A549 (cell line): ENCODE measurements at regions of chr2 and their contacts with region 1.

Region 1: GRCh38 chr2:29923110-29923721 is 1.8 kb upstream of the ALK start:
- DNase-seq: peak; percentile 75 to 77
- ATAC-seq: peak in 1 of 2 experiments; percentile 32; a peak in 1 of 6 replicates
- H3K4me3 ChIP-seq: no peak overlapping the region
- H3K27ac ChIP-seq: no peak overlapping the region
- H3K4me1 ChIP-seq: peaks cover 17% of the 10 kb centered on the region; the same call in 1 of the 3 replicates
- CTCF ChIP-seq: peak; percentile 97
- EP300 ChIP-seq: no peak
- POLR2A ChIP-seq: no peak
- RAD21 ChIP-seq: peak; percentile 80 to 84

Region 2: GRCh38 chr2:29463181-29463900 is 459.9 kb before region 1 on chr2:
- CTCF ChIA-PET with region 1: no interaction called
- POLR2A ChIA-PET with region 1: no interaction called
- DNase-seq: no peak
- ATAC-seq: no peak
- H3K4me3 ChIP-seq: no peak overlapping the region
- H3K27ac ChIP-seq: no peak overlapping the region
- H3K4me1 ChIP-seq: no peaks in the 10 kb centered on the region
- CTCF ChIP-seq: no peak
- EP300 ChIP-seq: no peak
- POLR2A ChIP-seq: no peak
- RAD21 ChIP-seq: no peak

Region 3: DNA sequence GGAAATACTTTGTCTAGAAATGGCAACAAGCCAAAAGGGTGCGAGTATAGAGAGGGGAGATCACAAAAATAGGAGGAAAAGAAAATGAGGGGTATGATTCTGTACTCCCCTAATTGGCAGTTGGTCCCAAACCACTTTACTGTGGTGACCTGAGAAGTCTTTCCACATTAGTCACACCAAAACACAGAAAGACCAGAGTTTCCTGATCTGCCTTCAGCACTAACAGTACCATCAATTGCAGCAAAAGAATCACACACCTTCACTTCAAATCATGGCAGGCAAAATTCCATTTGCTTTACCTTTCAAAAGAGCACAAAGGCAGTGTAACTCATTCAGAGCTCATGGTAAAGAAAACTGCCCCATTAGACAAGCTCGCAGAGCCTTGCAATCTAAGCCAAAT is 88.6 kb before region 1 on chr2:
- CTCF ChIA-PET with region 1: no interaction called
- POLR2A ChIA-PET with region 1: no interaction called
- DNase-seq: no peak
- ATAC-seq: no peak
- H3K4me3 ChIP-seq: no peak overlapping the region
- H3K27ac ChIP-seq: no peak overlapping the region
- H3K4me1 ChIP-seq: no peaks in the 10 kb centered on the region
- CTCF ChIP-seq: no peak
- EP300 ChIP-seq: no peak
- POLR2A ChIP-seq: no peak
- RAD21 ChIP-seq: no peak

Region 4: GRCh38 chr2:29910465-29910864 is 12.8 kb before region 1 on chr2:
- CTCF ChIA-PET with region 1: interaction called, 54 read pairs
- POLR2A ChIA-PET with region 1: no interaction called
- DNase-seq: no peak
- ATAC-seq: no peak
- H3K4me3 ChIP-seq: no peak overlapping the region
- H3K27ac ChIP-seq: no peak overlapping the region
- H3K4me1 ChIP-seq: no peaks in the 10 kb centered on the region
- CTCF ChIP-seq: no peak
- EP300 ChIP-seq: no peak
- POLR2A ChIP-seq: no peak
- RAD21 ChIP-seq: no peak

Region 5: DNA sequence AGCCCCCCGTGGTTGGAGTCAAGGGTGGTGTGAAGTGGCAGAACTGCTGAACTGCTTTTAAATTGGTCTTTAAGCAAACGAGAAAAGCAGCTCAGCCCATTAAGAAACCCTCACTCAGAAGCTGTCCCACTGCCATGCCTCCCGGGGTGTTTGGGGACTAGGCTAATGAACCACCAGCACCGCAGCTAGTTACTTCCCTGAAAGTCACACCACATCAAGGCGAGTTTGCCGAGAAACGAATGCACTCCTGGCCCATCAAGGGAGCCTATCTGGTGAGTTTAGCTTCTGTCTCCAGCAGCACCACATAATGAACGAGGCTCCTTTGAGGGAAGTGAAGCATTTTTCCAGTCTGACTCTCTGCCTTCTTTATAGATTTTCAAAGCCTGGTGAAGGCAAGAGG is 12.8 kb after region 1 on chr2:
- CTCF ChIA-PET with region 1: interaction called, 12 read pairs
- POLR2A ChIA-PET with region 1: no interaction called
- DNase-seq: no peak
- ATAC-seq: no peak
- H3K4me3 ChIP-seq: no peak overlapping the region
- H3K27ac ChIP-seq: no peak overlapping the region
- H3K4me1 ChIP-seq: no peaks in the 10 kb centered on the region
- CTCF ChIP-seq: no peak
- EP300 ChIP-seq: no peak
- POLR2A ChIP-seq: no peak
- RAD21 ChIP-seq: no peak

Region 6: DNA sequence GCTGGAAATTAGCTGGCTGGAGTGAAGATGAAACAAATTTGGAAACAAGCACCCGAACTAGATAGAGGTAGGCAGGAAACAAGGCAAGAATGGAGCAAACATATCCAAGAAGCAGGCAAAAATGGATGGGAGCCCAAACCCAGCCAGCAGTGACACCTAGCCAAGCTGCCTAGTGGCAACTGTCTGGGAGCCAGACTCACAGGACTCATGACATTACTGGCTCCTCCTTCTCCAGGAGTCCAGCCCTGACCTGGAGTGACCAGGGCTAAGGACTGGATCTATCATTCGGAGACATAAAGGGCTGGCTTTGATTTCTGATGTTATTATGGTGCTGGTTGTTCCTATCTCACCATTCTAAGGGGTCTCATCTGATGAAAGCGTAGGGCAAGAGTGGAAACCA is 19.5 kb after region 1 on chr2:
- CTCF ChIA-PET with region 1: interaction called, 11 read pairs
- POLR2A ChIA-PET with region 1: no interaction called
- DNase-seq: no peak
- ATAC-seq: no peak
- H3K4me3 ChIP-seq: no peak overlapping the region
- H3K27ac ChIP-seq: no peak overlapping the region
- H3K4me1 ChIP-seq: no peaks in the 10 kb centered on the region
- CTCF ChIP-seq: no peak
- EP300 ChIP-seq: no peak
- POLR2A ChIP-seq: no peak
- RAD21 ChIP-seq: no peak

Region 7: DNA sequence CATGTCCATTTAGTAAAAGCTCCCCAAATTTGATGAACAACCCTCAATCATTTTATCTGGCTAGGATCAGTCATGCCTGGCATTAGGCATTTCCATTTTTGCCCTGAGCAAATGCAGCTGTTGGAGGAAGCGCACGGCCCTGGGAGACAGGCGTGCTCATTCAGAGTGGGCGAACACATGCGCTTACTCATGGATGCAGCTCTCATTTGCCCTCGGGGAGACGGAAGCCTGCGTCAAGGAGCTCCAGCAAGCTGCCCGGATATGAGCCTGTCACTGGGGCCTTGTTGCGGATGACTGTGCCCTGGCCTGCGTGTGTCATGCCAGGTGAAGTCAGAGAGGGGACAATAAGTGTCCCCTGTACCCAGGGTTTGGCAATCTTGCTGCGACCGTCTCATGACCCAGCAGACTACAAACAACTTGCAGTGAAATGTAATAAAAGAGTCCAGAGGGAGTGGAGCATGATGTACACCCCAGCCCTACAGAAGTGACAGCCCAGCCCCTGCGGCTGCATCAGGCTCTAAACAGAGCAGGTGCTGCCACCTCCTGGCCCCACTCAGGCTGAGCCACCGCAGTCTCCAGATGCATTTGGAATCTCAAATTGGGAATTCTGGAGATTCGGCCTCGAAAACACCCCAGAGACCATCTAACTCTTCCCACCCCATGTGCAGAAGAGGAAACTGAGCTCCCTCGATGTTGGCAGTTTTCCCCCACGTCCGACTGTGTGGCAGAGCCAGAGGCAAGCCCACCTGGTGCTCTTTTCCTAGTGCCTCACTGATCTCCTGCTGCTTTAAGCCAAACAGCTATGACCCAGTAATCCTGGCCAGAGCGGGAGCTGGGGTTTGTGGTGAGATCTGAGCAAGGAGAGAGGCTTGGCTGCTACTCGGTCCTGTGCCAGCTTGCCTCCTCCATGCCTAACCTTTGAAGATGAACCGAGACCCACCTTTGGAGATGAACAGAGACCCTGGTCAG is 103.2 kb after region 1 on chr2:
- CTCF ChIA-PET with region 1: interaction called, 108 read pairs
- POLR2A ChIA-PET with region 1: no interaction called
- DNase-seq: peak; percentile 50 to 76
- ATAC-seq: peak; percentile 88 to 96
- H3K4me3 ChIP-seq: no peak overlapping the region
- H3K27ac ChIP-seq: no peak overlapping the region
- H3K4me1 ChIP-seq: no peaks in the 10 kb centered on the region
- CTCF ChIP-seq: peak; percentile 72
- EP300 ChIP-seq: no peak
- POLR2A ChIP-seq: no peak
- RAD21 ChIP-seq: peak; percentile 80 to 86

Region 8: DNA sequence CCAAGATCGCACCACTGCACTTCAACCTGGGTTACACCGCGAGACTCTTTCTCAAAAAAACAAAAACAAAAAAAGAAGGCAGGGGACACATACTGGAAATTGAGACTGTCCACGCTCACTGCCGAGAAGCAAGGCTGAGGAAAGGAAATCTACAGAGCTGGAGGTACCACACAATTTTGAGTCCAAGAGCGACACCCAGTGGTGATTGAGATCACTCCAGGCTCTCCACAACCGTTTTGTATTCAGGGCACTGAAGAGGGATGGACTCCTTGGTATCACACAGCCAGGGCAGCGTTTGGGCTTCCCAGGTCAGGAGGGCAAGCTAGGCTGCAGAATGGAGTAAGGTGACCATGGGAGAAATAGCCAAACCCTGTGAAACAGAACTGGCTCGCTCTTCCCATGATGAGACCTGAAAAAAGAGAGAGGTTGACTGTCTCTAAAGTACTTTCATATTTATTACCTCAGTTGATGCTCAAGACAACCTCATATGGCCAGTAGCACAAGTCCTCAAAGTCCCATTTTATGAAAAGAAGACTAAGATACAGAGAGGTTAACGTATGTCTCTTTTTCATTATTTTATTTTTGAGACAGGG is 149.1 kb after region 1 on chr2:
- CTCF ChIA-PET with region 1: interaction called, 16 read pairs
- POLR2A ChIA-PET with region 1: no interaction called
- DNase-seq: peak; percentile 58 to 74
- ATAC-seq: peak; percentile 97 to 99
- H3K4me3 ChIP-seq: no peak overlapping the region
- H3K27ac ChIP-seq: no peak overlapping the region
- H3K4me1 ChIP-seq: no peaks in the 10 kb centered on the region
- CTCF ChIP-seq: peak; percentile 73
- EP300 ChIP-seq: no peak
- POLR2A ChIP-seq: no peak
- RAD21 ChIP-seq: peak; percentile 78 to 86

Region 9: DNA sequence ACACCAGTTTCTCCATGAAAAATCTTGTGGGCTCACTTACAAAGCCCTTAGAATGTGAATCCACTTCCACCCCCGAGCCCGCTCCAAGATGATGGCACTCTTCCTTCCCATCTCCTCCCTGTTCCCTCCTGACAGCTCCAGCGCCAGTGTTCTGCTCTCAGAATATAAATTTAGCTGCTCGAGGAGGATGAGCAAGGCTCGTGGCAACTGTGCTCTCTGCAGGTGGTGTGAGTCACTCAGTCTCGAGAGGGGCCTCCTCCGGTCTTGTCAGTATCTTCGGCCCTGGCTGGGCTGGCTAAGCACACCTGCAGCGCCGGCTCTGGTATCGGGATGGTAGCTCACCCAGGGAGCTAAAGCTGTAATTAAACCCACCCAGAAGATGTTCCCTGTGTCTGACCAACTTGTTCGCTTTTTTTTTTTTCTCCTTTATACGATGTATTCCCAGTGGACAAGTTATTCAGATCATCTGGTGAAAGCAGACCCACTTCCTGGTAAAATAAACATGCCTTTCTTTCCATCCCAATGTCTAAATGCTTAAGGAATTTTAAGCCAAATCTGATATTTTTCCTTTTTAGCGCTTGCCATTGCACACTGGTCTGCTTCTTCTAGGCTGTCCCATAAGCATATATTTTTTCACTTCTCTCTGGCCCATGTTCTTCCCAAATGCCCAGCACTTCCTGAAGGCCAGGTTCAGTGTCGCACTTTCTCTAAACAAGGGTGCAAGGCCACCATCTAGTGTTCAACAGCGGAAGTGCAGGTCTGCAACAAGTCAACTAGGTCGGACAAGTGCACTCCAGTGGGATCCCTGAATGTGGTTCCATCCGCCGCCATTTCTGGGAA is 192.1 kb after region 1 on chr2:
- CTCF ChIA-PET with region 1: interaction called, 11 read pairs
- POLR2A ChIA-PET with region 1: no interaction called
- DNase-seq: peak; percentile 68 to 88
- ATAC-seq: peak; percentile 79 to 92
- H3K4me3 ChIP-seq: no peak overlapping the region
- H3K27ac ChIP-seq: 0 out of 6 replicates have a peak overlapping the region, but pooled peaks of 1 of the 2 experiments have one; percentile 8
- H3K4me1 ChIP-seq: peaks cover 23% of the 10 kb centered on the region
- CTCF ChIP-seq: peak; percentile 93
- EP300 ChIP-seq: no peak
- POLR2A ChIP-seq: no peak
- RAD21 ChIP-seq: peak; percentile 93 to 94